Activated naive CD4-positive, alpha-beta T cell treated with anti-CD3 and anti-CD28 coated beads for 36 hours (primary cell): ENCODE measurements at regions of chr2 and their contacts with region 1.

Region 1: GRCh38 chr2:3558205-3559014 is at the start of gene RNASEH1:
- DNase-seq: peak; percentile 99
- H3K4me3 Mint-ChIP-seq: peak within 1 kb of the TSS; percentile 84
- H3K27ac Mint-ChIP-seq: peak within 1 kb of the TSS; percentile 90
- H3K4me1 Mint-ChIP-seq: peaks cover 36% of the 10 kb centered on the region
- H3K27me3 Mint-ChIP-seq: no peaks in the 10 kb centered on the region
- total RNA-seq, gene RNASEH1: 23.0 to 24.0 TPM

Region 2: DNA sequence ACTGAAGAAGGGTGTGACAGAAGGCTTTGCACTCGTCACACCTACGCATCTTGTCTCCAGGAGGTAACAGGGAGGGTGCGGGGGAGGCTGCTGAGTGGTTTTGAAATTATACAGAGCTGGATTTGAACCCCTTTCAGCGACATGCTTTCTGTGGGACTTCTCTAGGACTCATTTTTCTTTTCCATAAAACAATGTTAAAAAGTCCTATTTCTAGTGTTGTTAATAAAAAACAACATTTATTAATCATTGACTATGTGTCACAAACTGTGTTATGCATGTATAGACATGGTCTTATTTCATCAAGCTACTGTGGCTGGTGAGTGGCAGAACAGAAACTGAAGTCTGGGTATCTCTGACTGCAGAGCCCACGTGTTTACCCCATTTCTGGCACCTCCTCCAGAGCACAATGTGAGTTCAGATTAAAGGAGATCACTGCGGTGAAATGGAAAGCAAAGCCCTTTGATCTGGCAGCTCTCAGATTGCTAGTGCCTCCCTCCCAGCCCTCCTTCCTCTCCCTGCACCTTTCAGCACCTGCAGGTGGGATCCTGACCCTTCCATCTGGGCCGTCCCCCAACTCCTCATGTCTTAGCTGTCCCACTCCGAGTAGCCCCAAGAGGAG is 911.9 kb before region 1 on chr2:
- CTCF ChIA-PET with region 1: no interaction called
- intact Hi-C with region 1: loop called (anchors 2 kb)
- DNase-seq: peak; percentile 75
- H3K4me3 Mint-ChIP-seq: peak overlapping the region; percentile 8
- H3K27ac Mint-ChIP-seq: peak overlapping the region; percentile 69
- H3K4me1 Mint-ChIP-seq: peaks cover 40% of the 10 kb centered on the region
- H3K27me3 Mint-ChIP-seq: no peaks in the 10 kb centered on the region

Region 3: GRCh38 chr2:3518496-3519254 is 39.7 kb before region 1 on chr2:
- CTCF ChIA-PET with region 1: interaction called, 4 read pairs
- intact Hi-C with region 1: loop called (anchors 1 kb)
- DNase-seq: peak; percentile 96
- H3K4me3 Mint-ChIP-seq: peak overlapping the region; percentile 84
- H3K27ac Mint-ChIP-seq: peak overlapping the region; percentile 85
- H3K4me1 Mint-ChIP-seq: peaks cover 27% of the 10 kb centered on the region
- H3K27me3 Mint-ChIP-seq: no peaks in the 10 kb centered on the region

Region 4: GRCh38 chr2:3575534-3576262 is 17.3 kb after region 1 on chr2:
- CTCF ChIA-PET with region 1: interaction called, 4 read pairs
- intact Hi-C with region 1: loop called (anchors 1 kb)
- DNase-seq: peak; percentile 27
- H3K4me3 Mint-ChIP-seq: peak overlapping the region; percentile 88
- H3K27ac Mint-ChIP-seq: peak overlapping the region; percentile 91
- H3K4me1 Mint-ChIP-seq: peaks cover 50% of the 10 kb centered on the region
- H3K27me3 Mint-ChIP-seq: no peaks in the 10 kb centered on the region

Region 5: DNA sequence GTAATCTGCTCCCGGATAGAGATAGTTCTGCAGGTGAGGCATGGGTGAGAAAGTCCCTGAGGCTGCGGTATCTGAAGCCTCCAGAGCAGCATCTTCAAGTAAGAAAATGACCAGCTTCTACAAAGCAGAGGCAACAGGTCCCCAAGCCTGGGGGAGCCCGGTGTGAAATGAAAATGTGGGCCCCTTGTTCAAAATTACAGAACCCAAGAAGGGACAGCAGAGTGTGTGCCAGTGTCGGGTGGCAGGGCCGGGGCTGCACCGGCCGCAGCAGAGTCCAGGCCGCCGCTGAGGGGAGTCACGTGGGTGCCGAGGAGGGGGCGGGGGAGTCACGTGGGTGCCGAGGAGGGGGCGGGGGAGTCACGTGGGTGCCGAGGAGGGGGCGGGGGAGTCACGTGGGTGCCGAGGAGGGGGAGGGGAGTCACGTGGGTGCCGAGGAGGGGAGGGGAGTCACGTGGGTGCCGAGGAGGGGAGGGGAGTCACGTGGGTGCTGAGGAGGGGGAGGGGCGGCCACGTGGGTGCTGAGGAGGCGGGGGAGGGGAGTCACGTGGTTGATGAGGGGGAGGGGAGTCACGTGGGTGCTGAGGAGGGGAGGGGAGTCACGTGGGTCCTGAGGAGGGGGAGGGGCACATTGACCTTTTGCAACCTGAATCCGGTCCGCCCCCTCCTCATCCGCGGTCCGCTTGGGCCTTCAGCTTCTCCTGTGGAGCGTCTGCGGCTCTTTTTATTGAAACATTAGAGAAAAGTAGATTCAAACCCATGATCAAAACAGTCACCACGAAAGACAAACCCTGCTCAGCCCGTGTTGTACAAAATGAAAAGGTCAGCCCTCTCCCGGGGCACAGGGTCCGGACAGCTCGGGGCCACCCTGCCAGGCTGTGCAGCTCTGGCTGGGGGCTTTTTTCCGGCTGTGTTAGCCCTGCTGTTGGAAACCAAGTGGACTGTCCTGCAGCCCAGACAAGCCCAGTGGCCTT is 46.9 kb after region 1 on chr2:
- CTCF ChIA-PET with region 1: no interaction called
- intact Hi-C with region 1: loop called (anchors 1 kb)
- DNase-seq: peak; percentile 77
- H3K4me3 Mint-ChIP-seq: peak overlapping the region; percentile 68
- H3K27ac Mint-ChIP-seq: peak overlapping the region; percentile 84
- H3K4me1 Mint-ChIP-seq: peaks cover 18% of the 10 kb centered on the region
- H3K27me3 Mint-ChIP-seq: no peaks in the 10 kb centered on the region